ENCODE measurements at regions of chr5 and their contacts with region 1.

Region 1: GRCh38 chr5:178075840-178076548 is 37.3 kb upstream of the N4BP3 start:
- DNase-seq: peak; percentile 76
- H3K4me3 ChIP-seq: no peak overlapping the region
- H3K27ac ChIP-seq: no peak overlapping the region
- H3K4me1 ChIP-seq: peaks cover 0 to 3% (median 0%) of the 10 kb centered on the region in 4 donors
- H3K27me3 ChIP-seq: peaks cover 18% of the 10 kb centered on the region
- CTCF ChIP-seq: peak; percentile 85 to 95 (median 86)
- EP300 ChIP-seq: no peak
- POLR2A ChIP-seq: no peak

Region 2: GRCh38 chr5:177232761-177233160 is 843.2 kb before region 1 on chr5:
- in situ Hi-C with region 1: no loop called
- intact Hi-C with region 1: no loop called
- DNase-seq: no peak
- H3K4me3 ChIP-seq: no peak overlapping the region
- H3K27ac ChIP-seq: peak overlapping the region in 2 of 4 donors; percentile 22 to 28
- H3K4me1 ChIP-seq: peaks cover 6 to 15% (median 8%) of the 10 kb centered on the region in 4 donors
- H3K27me3 ChIP-seq: no peaks in the 10 kb centered on the region
- CTCF ChIP-seq: no peak
- EP300 ChIP-seq: no peak
- POLR2A ChIP-seq: no peak

Region 3: GRCh38 chr5:177317959-177318377 is 758.0 kb before region 1 on chr5:
- in situ Hi-C with region 1: no loop called
- intact Hi-C with region 1: no loop called
- DNase-seq: peak; percentile 84
- H3K4me3 ChIP-seq: no peak overlapping the region
- H3K27ac ChIP-seq: no peak overlapping the region
- H3K4me1 ChIP-seq: peaks cover 0 to 2% (median under 1%) of the 10 kb centered on the region in 4 donors
- H3K27me3 ChIP-seq: no peaks in the 10 kb centered on the region
- CTCF ChIP-seq: peak; percentile 83 to 89 (median 87)
- EP300 ChIP-seq: no peak
- POLR2A ChIP-seq: no peak

Region 4: DNA sequence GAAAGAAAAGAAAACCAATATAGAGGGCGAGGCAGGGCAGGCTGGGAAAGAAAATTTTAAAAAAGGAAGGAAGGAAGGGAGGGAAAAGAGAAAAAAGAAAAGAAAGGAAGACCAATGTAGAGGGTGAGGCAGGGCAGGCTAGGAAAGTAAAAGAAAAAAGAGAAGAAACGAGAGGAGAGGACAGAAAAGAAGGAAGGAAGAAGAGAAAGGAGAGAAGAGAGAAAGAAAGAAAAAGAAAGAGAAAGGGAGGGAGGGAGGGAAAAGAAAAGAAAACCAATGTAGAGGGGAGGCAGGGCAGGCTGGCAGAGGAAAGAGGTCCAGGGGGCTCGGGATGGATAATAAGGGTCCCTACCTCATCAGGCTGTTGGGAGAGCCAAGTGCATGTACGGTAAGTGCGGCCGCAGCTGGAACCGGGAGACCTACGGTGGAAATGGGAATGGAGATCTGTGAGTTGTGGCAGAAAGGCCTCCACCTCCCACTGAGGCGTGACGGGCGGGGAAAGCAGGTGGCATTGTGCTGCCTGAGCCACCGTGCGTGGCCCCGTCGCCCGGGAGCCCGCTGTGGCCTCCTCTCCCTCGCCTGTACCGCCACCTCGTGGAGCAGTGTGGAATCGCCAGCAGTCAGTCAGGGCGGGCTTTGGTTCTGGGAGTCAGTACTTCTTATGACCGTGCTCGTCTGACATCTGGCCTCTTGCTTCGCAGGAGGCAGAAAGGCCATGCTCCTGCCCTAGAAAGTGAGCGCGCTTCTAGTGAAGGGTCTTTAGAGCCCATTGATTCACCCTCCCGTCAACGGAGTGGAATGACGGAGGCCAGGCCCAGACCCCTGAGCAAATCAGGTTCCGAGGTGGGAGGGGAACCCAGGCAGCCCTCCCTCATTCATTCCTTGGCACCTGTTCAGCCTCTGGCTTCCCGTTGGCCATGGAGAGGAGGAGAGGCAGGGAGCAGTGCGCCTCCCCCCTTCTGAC is 88.1 kb after region 1 on chr5:
- in situ Hi-C with region 1: loop called (anchors 5 to 10 kb)
- intact Hi-C with region 1: loop called (anchors 2 kb)
- DNase-seq: peak; percentile 92
- H3K4me3 ChIP-seq: no peak overlapping the region
- H3K27ac ChIP-seq: no peak overlapping the region
- H3K4me1 ChIP-seq: peaks cover 3 to 9% (median 5%) of the 10 kb centered on the region in 4 donors
- H3K27me3 ChIP-seq: peaks cover 29% of the 10 kb centered on the region
- CTCF ChIP-seq: peak; percentile 96 to 99 (median 99)
- EP300 ChIP-seq: no peak
- POLR2A ChIP-seq: no peak